ENCODE measurements at regions of chr19 and their contacts with region 1.

Region 1: GRCh38 chr19:28009696-28010095 is 1203.3 kb downstream of the UQCRFS1 start:
- DNase-seq: no peak
- H3K4me3 ChIP-seq: no peak overlapping the region
- H3K27ac ChIP-seq: no peak overlapping the region
- H3K4me1 ChIP-seq: no peaks in the 10 kb centered on the region
- H3K27me3 ChIP-seq: no peaks in the 10 kb centered on the region
- CTCF ChIP-seq: no peak
- EP300 ChIP-seq: no peak
- POLR2A ChIP-seq: no peak
- RAD21 ChIP-seq: no peak

Region 2: GRCh38 chr19:27906081-27906480 is 103.6 kb before region 1 on chr19:
- CTCF ChIA-PET with region 1: no interaction called
- POLR2A ChIA-PET with region 1: no interaction called
- DNase-seq: no peak
- H3K4me3 ChIP-seq: no peak overlapping the region
- H3K27ac ChIP-seq: no peak overlapping the region
- H3K4me1 ChIP-seq: no peaks in the 10 kb centered on the region
- H3K27me3 ChIP-seq: no peaks in the 10 kb centered on the region
- CTCF ChIP-seq: no peak
- EP300 ChIP-seq: no peak
- POLR2A ChIP-seq: no peak
- RAD21 ChIP-seq: no peak

Region 3: DNA sequence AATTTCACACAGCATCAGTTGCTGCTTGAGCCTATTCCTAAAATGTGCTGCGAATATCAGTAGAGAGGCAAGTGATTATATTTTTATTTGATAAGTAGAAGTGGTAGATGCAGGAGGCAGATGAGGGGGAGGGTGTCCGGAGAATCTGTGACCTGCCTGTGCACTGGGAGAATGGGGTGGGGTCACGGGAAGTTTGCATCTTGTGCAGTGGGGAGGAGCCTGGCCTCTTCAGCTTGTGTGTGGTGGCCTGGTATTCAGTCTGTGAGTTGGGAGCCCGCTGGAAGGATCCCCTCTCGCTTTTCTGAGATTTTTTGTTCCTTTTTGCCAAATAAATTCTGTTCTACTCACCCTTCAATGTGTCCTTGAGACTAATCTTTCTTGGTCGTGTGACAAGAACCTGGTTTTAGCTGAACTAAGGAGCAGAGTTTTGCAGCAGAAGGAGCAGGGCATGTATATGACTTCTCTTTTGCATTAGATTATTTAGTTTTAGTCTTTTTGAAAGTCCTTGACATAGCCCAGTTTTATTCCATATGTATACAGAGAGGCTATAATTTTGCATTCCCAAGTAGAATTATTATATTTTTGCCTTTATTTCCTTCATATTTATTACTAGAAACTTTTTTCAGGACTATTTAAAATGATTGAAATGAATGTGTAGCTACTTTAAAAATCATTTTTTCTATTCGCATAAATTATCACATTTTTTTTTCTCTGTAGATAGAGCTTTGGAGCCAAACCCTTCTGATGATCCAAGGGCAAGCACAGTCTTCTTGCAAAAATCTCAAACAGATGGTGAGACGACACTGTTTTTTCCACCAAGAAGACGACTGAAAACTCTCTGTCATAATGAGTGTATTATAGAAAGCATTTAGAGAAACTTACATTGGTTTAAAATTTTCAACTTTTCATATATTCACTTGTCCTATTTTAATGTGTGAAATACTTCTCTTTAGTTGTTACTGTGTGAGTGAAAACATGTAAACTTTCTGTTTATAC is 53.9 kb before region 1 on chr19:
- CTCF ChIA-PET with region 1: no interaction called
- POLR2A ChIA-PET with region 1: no interaction called
- DNase-seq: no peak
- H3K4me3 ChIP-seq: no peak overlapping the region
- H3K27ac ChIP-seq: no peak overlapping the region
- H3K4me1 ChIP-seq: no peaks in the 10 kb centered on the region
- H3K27me3 ChIP-seq: no peaks in the 10 kb centered on the region
- CTCF ChIP-seq: no peak
- EP300 ChIP-seq: no peak
- POLR2A ChIP-seq: no peak
- RAD21 ChIP-seq: no peak

Region 4: DNA sequence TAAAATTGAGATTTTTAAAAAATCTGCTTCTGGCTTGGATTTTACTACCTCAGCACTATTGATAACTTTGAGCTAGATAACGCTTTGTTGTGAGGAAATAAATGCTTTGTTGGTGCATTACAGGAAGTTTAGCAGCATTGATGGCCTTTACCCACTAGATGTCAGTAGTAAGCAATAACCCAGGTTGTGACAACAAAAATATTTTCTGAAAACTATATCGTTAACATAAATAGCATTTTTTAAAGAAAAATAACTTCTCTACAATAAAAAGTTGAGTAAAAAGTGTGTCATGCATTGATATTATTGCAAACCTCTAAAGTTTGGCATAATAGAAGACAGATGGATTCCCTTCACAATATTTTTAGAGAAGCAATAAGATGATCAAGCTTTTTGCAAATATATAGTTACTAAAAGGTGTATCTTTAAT is 43.3 kb before region 1 on chr19:
- CTCF ChIA-PET with region 1: interaction called, 10 read pairs
- POLR2A ChIA-PET with region 1: no interaction called
- DNase-seq: no peak
- H3K4me3 ChIP-seq: no peak overlapping the region
- H3K27ac ChIP-seq: no peak overlapping the region
- H3K4me1 ChIP-seq: 0 out of 7 replicates have a peak, but pooled peaks cover 0 to 5% (median 0%) of the 10 kb centered on the region in 4 experiments
- H3K27me3 ChIP-seq: no peaks in the 10 kb centered on the region
- CTCF ChIP-seq: peak in 2 of 3 experiments; percentile 29 to 58; a peak in 2 of 4 replicates
- EP300 ChIP-seq: no peak
- POLR2A ChIP-seq: no peak
- RAD21 ChIP-seq: peak; percentile 56 to 59

Region 5: DNA sequence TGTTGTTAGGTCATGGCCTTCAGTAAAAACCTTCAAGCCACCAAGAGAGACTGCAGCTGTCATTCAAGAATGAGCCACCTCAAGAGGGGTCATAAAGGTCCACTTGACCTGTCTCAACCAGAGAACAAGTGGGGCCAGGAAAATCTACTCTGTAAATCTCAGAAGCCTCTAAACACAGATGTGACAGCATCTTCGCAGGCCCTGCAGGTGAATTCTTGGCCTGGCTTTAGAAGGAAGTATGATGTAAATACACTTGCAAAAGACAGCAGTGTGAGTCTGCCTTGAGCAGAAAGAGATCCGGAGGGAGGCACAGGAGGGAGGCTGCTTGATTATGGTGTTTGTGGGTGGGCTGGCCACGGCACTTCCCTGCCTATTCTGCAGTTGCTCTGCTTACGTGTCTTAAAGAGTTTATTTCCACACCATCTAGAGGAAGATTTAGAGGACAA is 120.4 kb after region 1 on chr19:
- CTCF ChIA-PET with region 1: no interaction called
- POLR2A ChIA-PET with region 1: no interaction called
- DNase-seq: no peak
- H3K4me3 ChIP-seq: no peak overlapping the region
- H3K27ac ChIP-seq: no peak overlapping the region
- H3K4me1 ChIP-seq: peaks cover 0 to 4% (median 0%) of the 10 kb centered on the region in 4 experiments; a peak in 1 of 7 replicates
- H3K27me3 ChIP-seq: no peaks in the 10 kb centered on the region
- CTCF ChIP-seq: no peak
- EP300 ChIP-seq: no peak
- POLR2A ChIP-seq: no peak
- RAD21 ChIP-seq: no peak

Region 6: DNA sequence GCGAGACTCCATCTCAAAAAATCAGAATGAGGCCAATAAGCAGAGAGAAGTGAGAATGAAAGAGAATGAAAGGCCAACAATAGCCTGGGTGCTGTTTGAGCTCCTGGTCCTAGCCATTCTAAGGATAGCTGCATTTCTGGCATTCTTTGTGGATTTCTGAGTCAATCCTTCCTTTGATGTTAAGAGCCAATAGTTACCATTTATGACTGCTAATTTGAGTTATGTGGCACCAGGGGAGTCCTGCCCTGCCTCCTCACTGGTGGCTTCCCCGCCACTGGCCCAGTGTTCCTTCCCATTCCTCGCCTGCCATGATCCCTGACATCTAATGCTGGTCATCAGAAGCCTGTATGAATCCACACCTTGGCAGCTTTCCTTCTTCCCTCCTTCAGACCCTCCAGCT is 212.0 kb after region 1 on chr19:
- CTCF ChIA-PET with region 1: interaction called, 79 read pairs
- POLR2A ChIA-PET with region 1: no interaction called
- DNase-seq: no peak
- H3K4me3 ChIP-seq: no peak overlapping the region
- H3K27ac ChIP-seq: no peak overlapping the region
- H3K4me1 ChIP-seq: peaks cover 0 to 2% (median under 1%) of the 10 kb centered on the region in 4 experiments; a peak in 5 of 7 replicates
- H3K27me3 ChIP-seq: no peaks in the 10 kb centered on the region
- CTCF ChIP-seq: no peak
- EP300 ChIP-seq: no peak
- POLR2A ChIP-seq: no peak
- RAD21 ChIP-seq: no peak